Activated CD4-positive, alpha-beta T cell treated with anti-CD3 and anti-CD28 coated beads for 36 hours (primary cell): ENCODE measurements at regions of chr9 and their contacts with region 1.

Region 1: DNA sequence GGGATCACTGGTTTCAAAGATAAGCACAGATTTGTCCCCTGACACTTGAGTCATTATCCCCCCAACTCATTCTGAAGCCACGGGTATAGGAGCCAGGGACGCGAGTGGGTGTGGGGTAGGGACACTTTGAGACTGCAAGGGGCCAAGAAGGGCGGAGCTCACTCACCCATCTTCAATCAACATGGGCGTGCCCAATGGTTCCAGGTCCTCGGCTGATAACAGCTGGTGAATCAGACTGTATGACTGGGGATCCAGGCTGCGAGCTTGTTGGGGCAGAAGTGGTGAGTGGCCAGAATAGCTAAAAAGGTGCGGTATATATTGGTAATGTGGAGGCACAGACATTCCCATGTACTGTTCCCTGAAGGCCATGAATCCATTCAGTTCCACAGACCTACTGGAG is 30.7 kb upstream of the NR5A1 start:
- DNase-seq: no peak
- ATAC-seq: no peak
- H3K4me3 Mint-ChIP-seq: no peak overlapping the region
- H3K27ac Mint-ChIP-seq: no peak overlapping the region
- H3K4me1 Mint-ChIP-seq: no peaks in the 10 kb centered on the region
- H3K27me3 Mint-ChIP-seq: no peaks in the 10 kb centered on the region

Region 2: DNA sequence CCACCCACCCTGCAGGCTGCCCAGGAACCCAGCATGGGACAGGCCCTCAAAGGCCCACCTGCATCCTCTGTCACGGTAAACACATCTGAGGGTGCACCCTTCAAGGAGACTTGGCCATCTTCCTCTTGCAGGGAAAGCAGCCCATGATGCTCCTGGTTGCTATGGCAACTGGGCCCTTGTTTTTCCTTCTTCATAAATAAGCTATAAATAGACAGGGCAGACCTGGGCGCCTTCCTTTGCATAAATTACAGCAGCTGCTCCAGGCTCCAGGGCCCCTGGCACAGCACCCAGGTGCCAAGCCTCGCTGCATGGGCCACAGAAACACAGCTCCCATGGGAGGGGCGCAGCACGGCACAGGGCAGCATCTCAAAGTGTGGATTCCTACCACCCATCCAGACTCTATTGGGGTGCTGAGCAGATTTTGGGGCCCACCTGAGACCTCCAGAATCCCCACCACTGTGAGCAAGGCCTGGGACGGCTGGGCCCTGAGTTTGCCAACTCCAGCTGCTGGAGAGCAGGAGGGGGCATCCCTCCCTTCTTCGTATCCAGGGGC is 116.9 kb before region 1 on chr9:
- CTCF ChIA-PET with region 1: interaction called, 50 read pairs
- POLR2A ChIA-PET with region 1: no interaction called
- intact Hi-C with region 1: loop called (anchors 1 kb)
- DNase-seq: no peak
- ATAC-seq: no peak
- H3K4me3 Mint-ChIP-seq: no peak overlapping the region
- H3K27ac Mint-ChIP-seq: no peak overlapping the region
- H3K4me1 Mint-ChIP-seq: peaks cover 2% of the 10 kb centered on the region
- H3K27me3 Mint-ChIP-seq: no peaks in the 10 kb centered on the region

Region 3: DNA sequence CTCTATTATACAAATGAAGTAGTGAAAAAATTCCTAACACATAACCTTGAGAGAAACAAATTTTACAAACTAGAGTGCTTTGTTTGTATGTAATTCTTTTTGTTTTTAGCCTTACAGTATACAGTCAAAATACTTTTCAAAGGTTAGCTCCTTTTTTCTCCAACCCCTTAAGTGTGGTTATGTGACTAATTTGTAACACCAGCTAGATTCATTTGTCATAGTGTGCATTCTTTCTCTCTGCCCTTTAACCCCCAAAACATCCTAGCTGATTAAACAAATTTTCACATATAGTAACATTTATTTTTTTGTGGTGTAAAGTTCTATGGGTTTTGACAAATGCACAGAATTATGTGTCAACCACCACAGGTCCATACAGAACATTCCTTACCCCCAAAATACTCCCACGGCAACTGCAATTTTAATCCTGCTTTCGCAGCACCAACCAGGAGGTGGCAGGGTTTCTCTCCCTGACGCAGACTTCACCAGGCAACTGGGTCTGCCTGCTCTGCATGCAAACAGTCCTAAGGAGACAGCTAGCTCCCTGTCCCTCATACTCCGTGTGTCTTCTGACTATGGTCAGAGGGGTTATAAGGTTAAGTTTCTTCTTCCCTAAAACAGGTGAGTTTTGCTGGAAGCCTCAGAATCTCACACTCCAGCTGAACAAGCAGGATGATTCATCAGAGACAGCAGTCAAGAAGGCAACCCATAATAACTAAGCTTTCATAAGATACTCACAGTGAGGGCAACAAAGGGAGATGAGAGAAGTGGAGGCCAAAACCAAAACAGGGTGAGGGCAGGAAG is 13.7 kb after region 1 on chr9:
- CTCF ChIA-PET with region 1: interaction called, 33 read pairs
- POLR2A ChIA-PET with region 1: no interaction called
- intact Hi-C with region 1: no loop called
- DNase-seq: peak; percentile 63
- ATAC-seq: peak; percentile 91
- H3K4me3 Mint-ChIP-seq: no peak overlapping the region
- H3K27ac Mint-ChIP-seq: no peak overlapping the region
- H3K4me1 Mint-ChIP-seq: peaks cover 8% of the 10 kb centered on the region
- H3K27me3 Mint-ChIP-seq: peaks cover 4% of the 10 kb centered on the region

Region 4: GRCh38 chr9:125446581-125447094 is 908.7 kb after region 1 on chr9:
- CTCF ChIA-PET with region 1: no interaction called
- POLR2A ChIA-PET with region 1: no interaction called
- intact Hi-C with region 1: no loop called
- DNase-seq: no peak
- ATAC-seq: no peak
- H3K4me3 Mint-ChIP-seq: no peak overlapping the region
- H3K27ac Mint-ChIP-seq: no peak overlapping the region
- H3K4me1 Mint-ChIP-seq: no peaks in the 10 kb centered on the region
- H3K27me3 Mint-ChIP-seq: no peaks in the 10 kb centered on the region